ENCODE measurements at regions of chr2 and their contacts with region 1.

Region 1: GRCh38 chr2:127049927-127050802 is 56.8 kb downstream of the BIN1 start:
- DNase-seq: peak; percentile 50 to 73 (median 62)
- H3K4me3 ChIP-seq: no peak overlapping the region
- H3K27ac ChIP-seq: no peak overlapping the region
- H3K4me1 ChIP-seq: peaks cover 0 to 12% of the 10 kb centered on the region in 2 donors
- H3K27me3 ChIP-seq: no peaks in the 10 kb centered on the region
- CTCF ChIP-seq: peak; percentile 75 to 97 (median 84)
- POLR2A ChIP-seq: no peak

Region 2: GRCh38 chr2:127007652-127008051 is 42.5 kb before region 1 on chr2:
- intact Hi-C with region 1: no loop called
- DNase-seq: no peak
- H3K4me3 ChIP-seq: no peak overlapping the region
- H3K27ac ChIP-seq: no peak overlapping the region
- H3K4me1 ChIP-seq: no peaks in the 10 kb centered on the region
- H3K27me3 ChIP-seq: peaks cover 3% of the 10 kb centered on the region
- CTCF ChIP-seq: no peak
- POLR2A ChIP-seq: no peak

Region 3: DNA sequence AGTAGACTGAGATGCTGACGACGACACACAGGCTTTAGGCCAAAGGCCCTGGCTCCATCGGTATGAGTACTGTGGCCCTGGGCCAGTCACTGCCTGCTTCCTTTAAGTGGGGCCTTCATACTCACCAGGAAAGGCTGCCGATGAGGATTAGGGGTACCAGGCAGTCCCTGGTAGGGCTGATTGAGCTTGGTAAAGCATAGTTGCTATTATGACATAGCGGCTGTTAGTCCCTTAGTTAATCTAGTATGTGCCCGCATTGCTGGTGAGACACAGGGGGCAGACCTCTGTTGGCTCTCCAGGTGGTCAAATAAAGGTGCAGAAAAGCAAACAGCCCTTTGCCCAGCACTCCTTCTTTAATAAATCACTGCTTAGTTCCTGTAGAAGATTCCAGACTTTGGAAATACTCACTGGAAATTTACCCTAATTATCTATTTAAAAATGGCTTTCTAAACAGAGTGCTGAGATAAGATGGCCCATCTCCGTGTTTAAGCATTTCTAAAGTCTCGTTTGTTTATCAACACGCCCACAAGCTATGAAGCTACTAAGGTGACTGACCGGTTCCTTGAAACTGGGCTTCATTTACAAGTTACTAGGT is 65.4 kb after region 1 on chr2:
- intact Hi-C with region 1: no loop called
- DNase-seq: peak in 1 of 7 donors; percentile 46
- H3K4me3 ChIP-seq: no peak overlapping the region
- H3K27ac ChIP-seq: no peak overlapping the region
- H3K4me1 ChIP-seq: no peaks in the 10 kb centered on the region
- H3K27me3 ChIP-seq: no peaks in the 10 kb centered on the region
- CTCF ChIP-seq: no peak
- POLR2A ChIP-seq: no peak

Region 4: GRCh38 chr2:127293748-127294562 is 243.8 kb after region 1 on chr2 and contains the start of gene ERCC3:
- intact Hi-C with region 1: loop called in 1 of 2 experiments (anchors 10 kb)
- DNase-seq: peak; percentile 69 to 85 (median 81)
- H3K4me3 ChIP-seq: peak within 1 kb of the TSS; percentile 27 to 99 (median 96)
- H3K27ac ChIP-seq: peak within 1 kb of the TSS in 4 of 5 donors; percentile 54 to 90 (median 72)
- H3K4me1 ChIP-seq: peaks cover 7 to 16% of the 10 kb centered on the region in 2 donors
- H3K27me3 ChIP-seq: no peaks in the 10 kb centered on the region
- CTCF ChIP-seq: no peak
- POLR2A ChIP-seq: peak in 1 of 2 donors; percentile 29
- total RNA-seq, gene ERCC3: 26.7 to 65.8 (median 37.4) TPM

Measured in adrenal gland (tissue), 19 donors.